Activated CD4-positive, alpha-beta memory T cell treated with anti-CD3 and anti-CD28 coated beads, Interleukin-2, amount 10 ng/mL, durations not matched to agents 7 days and 5 days (primary cell): ENCODE measurements at regions of chr16 and their contacts with region 1.

Region 1: GRCh38 chr16:74666425-74667254 is at the start of gene RFWD3:
- DNase-seq: peak; percentile 98
- H3K4me3 Mint-ChIP-seq: peak within 1 kb of the TSS; percentile 94
- H3K27ac Mint-ChIP-seq: peak within 1 kb of the TSS; percentile 96
- H3K4me1 Mint-ChIP-seq: peaks cover 45% of the 10 kb centered on the region
- H3K27me3 Mint-ChIP-seq: no peaks in the 10 kb centered on the region
- total RNA-seq, gene RFWD3: 99.5 to 107 TPM

Region 2: DNA sequence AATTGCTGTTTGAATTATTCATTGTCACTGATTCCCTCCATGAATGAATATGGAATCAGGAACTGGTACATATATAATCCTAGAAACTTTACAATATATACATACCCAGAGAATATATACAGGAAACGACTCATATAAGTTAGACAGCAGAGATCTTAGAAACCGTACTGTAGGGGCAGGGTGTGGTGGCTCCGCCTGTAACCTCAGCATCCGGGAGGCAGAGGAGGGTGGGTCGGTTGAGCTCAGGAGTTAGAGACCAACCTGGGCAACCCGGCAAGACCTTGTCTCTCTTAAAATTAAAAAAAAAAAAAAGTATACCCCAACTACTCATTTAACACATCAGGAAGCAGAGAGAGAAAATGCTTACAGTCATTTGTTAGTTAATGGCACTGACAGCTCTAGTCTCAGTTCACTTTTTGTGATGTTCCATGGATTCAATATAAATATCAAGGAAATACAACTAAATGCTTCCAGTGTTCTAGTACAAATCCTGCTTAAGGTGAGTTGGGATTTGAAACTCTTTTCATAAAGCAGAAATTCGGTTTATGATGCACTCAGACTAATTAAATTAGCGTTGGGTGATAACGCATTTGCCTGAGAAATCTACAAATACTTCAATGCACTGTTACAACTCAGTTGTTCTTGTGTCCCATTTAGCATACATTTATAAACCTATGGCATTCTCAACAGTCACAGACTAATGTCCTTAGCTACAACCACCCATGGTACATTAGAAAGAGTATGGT is 65.3 kb before region 1 on chr16:
- CTCF ChIA-PET with region 1: no interaction called
- POLR2A ChIA-PET with region 1: interaction called, 41 read pairs
- DNase-seq: peak; percentile 85
- H3K4me3 Mint-ChIP-seq: peak overlapping the region; percentile 72
- H3K27ac Mint-ChIP-seq: peak overlapping the region; percentile 95
- H3K4me1 Mint-ChIP-seq: peaks cover 68% of the 10 kb centered on the region
- H3K27me3 Mint-ChIP-seq: no peaks in the 10 kb centered on the region

Region 3: DNA sequence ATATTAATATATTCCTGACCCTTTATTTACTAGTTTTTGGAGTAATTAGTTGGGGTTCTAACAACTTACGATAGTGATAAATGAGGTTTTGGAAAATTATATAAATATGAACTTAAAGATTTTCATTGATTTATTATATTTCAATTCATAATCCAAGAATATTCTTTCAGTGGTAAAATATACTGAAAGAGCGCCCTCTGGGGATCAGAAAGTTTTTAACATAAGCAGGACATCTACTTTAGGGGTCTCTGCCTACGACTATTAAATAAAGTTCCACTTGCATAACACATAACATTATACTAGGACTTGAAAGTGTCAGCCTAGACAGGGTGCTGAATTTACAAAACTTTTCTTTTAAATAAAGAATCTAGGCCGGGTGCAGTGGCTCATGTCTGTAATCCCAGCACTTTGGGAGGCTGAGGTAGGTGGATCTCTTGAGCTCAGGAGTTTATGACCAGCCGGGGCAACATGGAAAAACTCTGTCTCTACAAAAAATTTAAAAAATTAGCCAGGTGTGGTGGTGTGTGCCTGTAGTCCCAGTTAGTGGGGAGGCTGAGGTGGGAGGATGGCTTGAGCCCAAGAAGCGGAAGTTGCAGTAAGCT is 15.6 kb before region 1 on chr16:
- CTCF ChIA-PET with region 1: interaction called, 36 read pairs
- POLR2A ChIA-PET with region 1: interaction called, 62 read pairs
- DNase-seq: no peak
- H3K4me3 Mint-ChIP-seq: no peak overlapping the region
- H3K27ac Mint-ChIP-seq: no peak overlapping the region
- H3K4me1 Mint-ChIP-seq: peaks cover 24% of the 10 kb centered on the region
- H3K27me3 Mint-ChIP-seq: no peaks in the 10 kb centered on the region

Region 4: GRCh38 chr16:74695450-74696422 is 29.1 kb after region 1 on chr16:
- CTCF ChIA-PET with region 1: interaction called, 25 read pairs
- POLR2A ChIA-PET with region 1: interaction called, 186 read pairs
- DNase-seq: peak; percentile 75
- H3K4me3 Mint-ChIP-seq: peak overlapping the region; percentile 73
- H3K27ac Mint-ChIP-seq: peak overlapping the region; percentile 73
- H3K4me1 Mint-ChIP-seq: peaks cover 52% of the 10 kb centered on the region
- H3K27me3 Mint-ChIP-seq: no peaks in the 10 kb centered on the region

Region 5: GRCh38 chr16:74743668-74744299 is 77.1 kb after region 1 on chr16:
- CTCF ChIA-PET with region 1: no interaction called
- POLR2A ChIA-PET with region 1: no interaction called
- DNase-seq: no peak
- H3K4me3 Mint-ChIP-seq: no peak overlapping the region
- H3K27ac Mint-ChIP-seq: no peak overlapping the region
- H3K4me1 Mint-ChIP-seq: no peaks in the 10 kb centered on the region
- H3K27me3 Mint-ChIP-seq: no peaks in the 10 kb centered on the region